ENCODE measurements at regions of chr6 and their contacts with region 1.

Region 1: GRCh38 chr6:34196126-34196830 is 40.4 kb upstream of the HMGA1 start:
- DNase-seq: peak; percentile 4
- H3K4me3 ChIP-seq: peak overlapping the region; percentile 59
- CTCF ChIP-seq: peak; percentile 97

Region 2: DNA sequence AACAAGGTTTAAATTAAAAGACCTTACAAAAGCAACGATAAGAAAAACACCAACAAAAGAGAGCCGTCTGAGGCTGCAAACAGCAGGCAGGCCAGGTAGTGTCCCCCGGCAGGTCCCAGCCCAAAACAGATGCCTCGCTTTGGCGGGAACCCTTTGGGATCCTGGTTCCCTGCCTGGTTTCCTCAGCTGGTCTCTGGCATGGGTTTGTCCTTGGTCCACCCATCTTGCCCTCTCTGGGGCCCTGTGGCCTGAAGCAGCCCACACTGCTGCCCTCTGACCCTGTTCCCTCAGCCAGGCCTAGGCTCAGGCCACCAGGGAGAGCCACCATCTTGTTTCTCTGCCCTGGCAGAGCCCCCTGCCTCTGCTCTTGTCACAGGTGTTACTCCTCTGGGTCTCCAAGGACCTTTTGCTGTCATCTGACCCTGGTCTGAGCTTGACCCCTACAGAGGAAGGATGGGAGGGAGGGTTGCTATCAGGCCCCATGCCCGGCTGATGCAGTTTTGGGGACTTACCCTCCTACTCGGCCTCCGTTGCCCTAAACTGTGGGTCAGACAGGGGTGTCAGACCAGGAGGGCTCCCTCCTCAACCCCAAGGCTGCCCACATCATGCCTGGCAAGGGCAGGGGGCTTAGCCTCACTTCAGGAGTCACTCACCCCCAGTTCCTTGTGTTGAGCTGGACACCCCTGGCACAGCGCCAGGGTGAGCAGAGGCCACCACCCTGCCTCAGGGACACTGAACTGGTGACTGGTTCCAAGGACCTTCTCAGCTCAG is 19.8 kb before region 1 on chr6:
- CTCF ChIA-PET with region 1: interaction called, 16 read pairs
- POLR2A ChIA-PET with region 1: no interaction called
- DNase-seq: no peak
- H3K4me3 ChIP-seq: no peak overlapping the region
- CTCF ChIP-seq: no peak

Region 3: GRCh38 chr6:34223956-34224940 is 28.0 kb after region 1 on chr6:
- CTCF ChIA-PET with region 1: interaction called, 10 read pairs
- POLR2A ChIA-PET with region 1: no interaction called
- DNase-seq: peak; percentile 63
- H3K4me3 ChIP-seq: peak overlapping the region; percentile 58
- CTCF ChIP-seq: no peak

Region 4: GRCh38 chr6:34392497-34393190 is 196.4 kb after region 1 on chr6 and contains the start of gene NUDT3:
- CTCF ChIA-PET with region 1: interaction called, 17 read pairs
- POLR2A ChIA-PET with region 1: no interaction called
- DNase-seq: peak; percentile 49
- H3K4me3 ChIP-seq: peak within 1 kb of the TSS; percentile 83
- CTCF ChIP-seq: peak; percentile 91

Region 5: GRCh38 chr6:34459899-34460593 is 263.8 kb after region 1 on chr6:
- CTCF ChIA-PET with region 1: interaction called, 11 read pairs
- POLR2A ChIA-PET with region 1: no interaction called
- DNase-seq: no peak
- H3K4me3 ChIP-seq: no peak overlapping the region
- CTCF ChIP-seq: peak; percentile 45

Measured in AG04449 (cell line).